WTC11 (cell line): ENCODE measurements at regions of chr1 and their contacts with region 1.

Region 1: GRCh38 chr1:67214420-67215174 is 48.3 kb downstream of the IL23R start:
- DNase-seq: peak; percentile 29
- ATAC-seq: no peak; the same call in 1 of the 2 replicates
- H3K4me3 Mint-ChIP-seq: no peak overlapping the region
- H3K27ac Mint-ChIP-seq: no peak overlapping the region
- H3K4me1 Mint-ChIP-seq: peaks cover 9% of the 10 kb centered on the region
- H3K27me3 Mint-ChIP-seq: no peaks in the 10 kb centered on the region
- CTCF ChIP-seq: no peak; the same call in 1 of the 2 replicates

Region 2: GRCh38 chr1:67149179-67149770 is 65.3 kb before region 1 on chr1:
- CTCF ChIA-PET with region 1: interaction called, 32 read pairs
- POLR2A ChIA-PET with region 1: no interaction called
- DNase-seq: peak; percentile 67
- ATAC-seq: peak; percentile 96
- H3K4me3 Mint-ChIP-seq: no peak overlapping the region
- H3K27ac Mint-ChIP-seq: no peak overlapping the region
- H3K4me1 Mint-ChIP-seq: peaks cover 8% of the 10 kb centered on the region
- H3K27me3 Mint-ChIP-seq: peaks cover 7% of the 10 kb centered on the region; the same call in 1 of the 2 replicates
- CTCF ChIP-seq: peak; percentile 41; the same call in 1 of the 2 replicates

Region 3: GRCh38 chr1:67224856-67225255 is 10.3 kb after region 1 on chr1:
- CTCF ChIA-PET with region 1: interaction called, 20 read pairs
- POLR2A ChIA-PET with region 1: interaction called, 3 read pairs
- DNase-seq: no peak
- ATAC-seq: peak; percentile 30; the same call in 1 of the 2 replicates
- H3K4me3 Mint-ChIP-seq: no peak overlapping the region
- H3K27ac Mint-ChIP-seq: no peak overlapping the region
- H3K4me1 Mint-ChIP-seq: peaks cover 10% of the 10 kb centered on the region
- H3K27me3 Mint-ChIP-seq: peaks cover 3% of the 10 kb centered on the region
- CTCF ChIP-seq: no peak

Region 4: DNA sequence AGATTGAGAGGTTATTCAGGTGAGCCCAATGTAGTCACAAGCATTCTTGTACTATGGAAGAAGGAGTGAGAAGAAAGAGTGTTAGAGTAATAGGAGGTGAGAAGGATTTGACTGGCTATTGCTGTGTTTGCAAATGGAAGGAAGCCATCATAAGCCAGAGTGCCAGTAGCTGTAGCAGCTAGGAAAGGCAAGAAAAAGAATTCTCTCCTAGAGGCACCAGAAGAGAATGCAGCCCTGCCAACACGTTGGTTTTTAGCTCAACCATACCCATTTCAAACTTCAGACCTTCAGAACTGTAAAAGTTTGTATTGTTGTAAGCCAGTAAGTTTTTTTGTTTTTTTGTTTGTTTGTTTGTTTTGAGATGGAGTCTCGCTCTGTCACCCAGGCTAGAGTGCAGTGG is 84.2 kb after region 1 on chr1:
- CTCF ChIA-PET with region 1: interaction called, 16 read pairs
- POLR2A ChIA-PET with region 1: no interaction called
- DNase-seq: no peak
- ATAC-seq: peak; percentile 77
- H3K4me3 Mint-ChIP-seq: no peak overlapping the region
- H3K27ac Mint-ChIP-seq: no peak overlapping the region
- H3K4me1 Mint-ChIP-seq: peaks cover 2% of the 10 kb centered on the region
- H3K27me3 Mint-ChIP-seq: no peaks in the 10 kb centered on the region; the same call in none of the 2 replicates
- CTCF ChIP-seq: no peak

Region 5: GRCh38 chr1:67347688-67348472 is 133.3 kb after region 1 on chr1:
- CTCF ChIA-PET with region 1: interaction called, 62 read pairs
- POLR2A ChIA-PET with region 1: no interaction called
- DNase-seq: peak; percentile 49
- ATAC-seq: peak; percentile 95
- H3K4me3 Mint-ChIP-seq: no peak overlapping the region
- H3K27ac Mint-ChIP-seq: no peak overlapping the region
- H3K4me1 Mint-ChIP-seq: peaks cover 26% of the 10 kb centered on the region
- H3K27me3 Mint-ChIP-seq: peaks cover 6% of the 10 kb centered on the region; the same call in 1 of the 2 replicates
- CTCF ChIP-seq: peak; percentile 33